ENCODE measurements at regions of chr21 and their contacts with region 1.

Region 1: DNA sequence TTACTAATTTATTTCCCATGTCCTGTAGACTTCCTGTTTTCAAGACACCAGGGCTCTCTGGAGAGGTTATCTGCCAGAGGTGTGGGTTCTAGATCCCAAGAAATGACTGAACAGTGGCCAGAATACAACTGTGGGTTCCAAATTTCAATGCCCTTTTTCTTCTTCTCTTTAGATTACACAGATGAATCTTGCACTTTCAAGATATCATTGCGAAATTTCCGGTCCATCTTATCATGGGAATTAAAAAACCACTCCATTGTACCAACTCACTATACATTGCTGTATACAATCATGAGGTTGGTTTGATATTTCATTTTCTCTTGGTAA is 15.0 kb downstream of the IFNAR2 start:
- DNase-seq: no peak
- ATAC-seq: no peak

Region 2: DNA sequence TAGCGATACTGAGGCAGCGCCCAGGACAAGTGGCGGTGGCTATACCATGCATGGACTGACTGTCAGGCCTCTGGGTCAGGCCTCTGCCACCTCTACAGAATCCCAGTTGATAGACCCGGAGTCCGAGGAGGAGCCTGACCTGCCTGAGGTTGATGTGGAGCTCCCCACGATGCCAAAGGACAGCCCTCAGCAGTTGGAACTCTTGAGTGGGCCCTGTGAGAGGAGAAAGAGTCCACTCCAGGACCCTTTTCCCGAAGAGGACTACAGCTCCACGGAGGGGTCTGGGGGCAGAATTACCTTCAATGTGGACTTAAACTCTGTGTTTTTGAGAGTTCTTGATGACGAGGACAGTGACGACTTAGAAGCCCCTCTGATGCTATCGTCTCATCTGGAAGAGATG is 18.2 kb after region 1 on chr21:
- intact Hi-C with region 1: loop called (anchors 1 kb)
- DNase-seq: no peak
- ATAC-seq: no peak